B cell (primary cell): ENCODE measurements at regions of chr7 and their contacts with region 1.

Region 1: GRCh38 chr7:69448071-69448470 is 150.2 kb upstream of the AUTS2 start:
- DNase-seq: no peak
- ATAC-seq: no peak
- H3K4me3 ChIP-seq: no peak overlapping the region
- H3K4me3 Mint-ChIP-seq: no peak overlapping the region
- H3K27ac ChIP-seq: no peak overlapping the region
- H3K27ac Mint-ChIP-seq: no peak overlapping the region
- H3K4me1 ChIP-seq: no peaks in the 10 kb centered on the region
- H3K4me1 Mint-ChIP-seq: no peaks in the 10 kb centered on the region
- H3K27me3 ChIP-seq: no peaks in the 10 kb centered on the region
- H3K27me3 Mint-ChIP-seq: no peaks in the 10 kb centered on the region
- CTCF ChIP-seq: no peak

Region 2: DNA sequence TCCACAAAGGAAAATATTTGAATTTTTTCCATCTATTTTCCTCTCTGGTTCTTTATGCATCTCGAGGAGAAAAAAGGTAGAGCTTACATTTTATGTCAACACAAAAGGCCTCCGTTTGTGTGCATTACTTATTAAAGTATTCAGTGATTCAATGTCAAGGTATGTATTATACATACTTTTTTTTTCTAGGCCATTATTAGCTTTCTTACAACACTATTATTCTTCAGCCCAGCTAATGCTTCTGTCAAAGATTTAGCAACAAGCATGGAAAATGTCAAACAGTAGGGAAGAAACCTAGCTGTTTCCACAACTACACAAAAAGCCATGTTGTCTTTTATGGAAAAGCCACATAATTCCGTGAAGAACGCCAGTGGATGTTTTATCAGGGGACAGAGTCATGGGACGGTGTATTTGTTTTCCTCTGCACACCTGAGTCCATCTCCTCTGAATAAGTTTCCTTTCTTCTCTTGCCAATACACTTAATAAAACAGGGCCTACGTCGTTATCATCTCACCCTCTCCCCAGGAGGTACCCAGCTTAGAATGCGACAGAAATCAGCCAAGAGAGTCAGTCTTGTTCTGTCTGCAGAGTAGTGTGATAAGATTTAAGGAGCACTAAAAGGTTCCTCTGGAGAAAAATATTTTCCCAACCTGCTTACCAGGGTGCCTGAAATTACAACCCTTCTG is 59.5 kb before region 1 on chr7:
- CTCF ChIA-PET with region 1: no interaction called
- POLR2A ChIA-PET with region 1: no interaction called
- intact Hi-C with region 1: loop called (anchors 2 kb)
- DNase-seq: no peak
- ATAC-seq: no peak
- H3K4me3 ChIP-seq: no peak overlapping the region
- H3K4me3 Mint-ChIP-seq: no peak overlapping the region
- H3K27ac ChIP-seq: no peak overlapping the region
- H3K27ac Mint-ChIP-seq: no peak overlapping the region
- H3K4me1 ChIP-seq: no peaks in the 10 kb centered on the region
- H3K4me1 Mint-ChIP-seq: no peaks in the 10 kb centered on the region
- H3K27me3 ChIP-seq: no peaks in the 10 kb centered on the region
- H3K27me3 Mint-ChIP-seq: no peaks in the 10 kb centered on the region
- CTCF ChIP-seq: no peak

Region 3: DNA sequence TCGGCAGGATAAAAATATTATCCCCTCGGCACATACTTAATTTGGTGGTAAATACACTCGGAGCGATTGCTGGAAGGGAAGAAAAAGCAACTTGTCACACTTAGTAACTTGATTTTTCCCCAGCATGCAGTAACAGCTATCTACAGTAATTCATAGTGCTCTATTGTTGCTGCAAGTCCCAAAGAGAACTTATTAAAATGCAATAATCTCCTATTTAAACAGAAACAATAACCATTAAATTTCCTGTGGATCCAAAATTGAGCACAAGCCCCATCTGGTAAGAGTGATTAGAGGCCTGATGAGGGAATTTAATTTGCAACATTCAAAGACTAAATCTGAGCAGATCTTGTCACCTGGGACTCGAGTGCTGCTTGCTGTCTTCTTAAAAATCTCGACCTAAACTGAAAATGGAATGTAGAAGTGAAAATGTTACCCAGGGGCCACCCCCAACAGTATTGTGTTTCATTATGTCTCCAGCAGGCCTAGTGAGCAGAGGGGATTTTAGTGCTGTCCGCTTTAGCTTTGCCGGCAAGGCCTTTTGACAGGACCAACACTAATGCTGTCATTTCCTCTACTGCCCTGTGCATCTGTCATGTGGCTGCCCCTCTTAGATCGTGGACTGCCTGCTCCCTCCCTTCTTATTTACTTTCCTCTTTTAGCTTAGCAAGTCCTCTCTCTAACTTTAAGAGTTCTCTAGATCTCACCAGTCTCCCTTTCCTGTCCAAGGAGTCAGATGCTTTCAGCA is 789.9 kb after region 1 on chr7:
- CTCF ChIA-PET with region 1: no interaction called
- POLR2A ChIA-PET with region 1: no interaction called
- intact Hi-C with region 1: no loop called
- DNase-seq: peak; percentile 64
- ATAC-seq: peak; percentile 84
- H3K4me3 ChIP-seq: peak overlapping the region in 1 of 5 experiments; percentile 10
- H3K4me3 Mint-ChIP-seq: peak overlapping the region; percentile 57
- H3K27ac ChIP-seq: peak overlapping the region; percentile 26 to 65
- H3K27ac Mint-ChIP-seq: peak overlapping the region; percentile 70
- H3K4me1 ChIP-seq: peaks cover 14 to 16% of the 10 kb centered on the region in 2 donors
- H3K4me1 Mint-ChIP-seq: peaks cover 17% of the 10 kb centered on the region
- H3K27me3 ChIP-seq: no peaks in the 10 kb centered on the region
- H3K27me3 Mint-ChIP-seq: no peaks in the 10 kb centered on the region
- CTCF ChIP-seq: no peak